Activated CD4-positive, alpha-beta T cell treated with anti-CD3 and anti-CD28 coated beads for 36 hours (primary cell): ENCODE measurements at regions of chr6 and their contacts with region 1.

Region 1: GRCh38 chr6:36885461-36886401 is at the start of gene C6orf89:
- DNase-seq: peak; percentile 99
- ATAC-seq: peak; percentile 100
- H3K4me3 Mint-ChIP-seq: peak within 1 kb of the TSS; percentile 89
- H3K27ac Mint-ChIP-seq: peak within 1 kb of the TSS; percentile 97
- H3K4me1 Mint-ChIP-seq: peaks cover 31% of the 10 kb centered on the region
- H3K27me3 Mint-ChIP-seq: no peaks in the 10 kb centered on the region
- total RNA-seq, gene C6orf89: 29.5 to 36.2 TPM

Region 2: DNA sequence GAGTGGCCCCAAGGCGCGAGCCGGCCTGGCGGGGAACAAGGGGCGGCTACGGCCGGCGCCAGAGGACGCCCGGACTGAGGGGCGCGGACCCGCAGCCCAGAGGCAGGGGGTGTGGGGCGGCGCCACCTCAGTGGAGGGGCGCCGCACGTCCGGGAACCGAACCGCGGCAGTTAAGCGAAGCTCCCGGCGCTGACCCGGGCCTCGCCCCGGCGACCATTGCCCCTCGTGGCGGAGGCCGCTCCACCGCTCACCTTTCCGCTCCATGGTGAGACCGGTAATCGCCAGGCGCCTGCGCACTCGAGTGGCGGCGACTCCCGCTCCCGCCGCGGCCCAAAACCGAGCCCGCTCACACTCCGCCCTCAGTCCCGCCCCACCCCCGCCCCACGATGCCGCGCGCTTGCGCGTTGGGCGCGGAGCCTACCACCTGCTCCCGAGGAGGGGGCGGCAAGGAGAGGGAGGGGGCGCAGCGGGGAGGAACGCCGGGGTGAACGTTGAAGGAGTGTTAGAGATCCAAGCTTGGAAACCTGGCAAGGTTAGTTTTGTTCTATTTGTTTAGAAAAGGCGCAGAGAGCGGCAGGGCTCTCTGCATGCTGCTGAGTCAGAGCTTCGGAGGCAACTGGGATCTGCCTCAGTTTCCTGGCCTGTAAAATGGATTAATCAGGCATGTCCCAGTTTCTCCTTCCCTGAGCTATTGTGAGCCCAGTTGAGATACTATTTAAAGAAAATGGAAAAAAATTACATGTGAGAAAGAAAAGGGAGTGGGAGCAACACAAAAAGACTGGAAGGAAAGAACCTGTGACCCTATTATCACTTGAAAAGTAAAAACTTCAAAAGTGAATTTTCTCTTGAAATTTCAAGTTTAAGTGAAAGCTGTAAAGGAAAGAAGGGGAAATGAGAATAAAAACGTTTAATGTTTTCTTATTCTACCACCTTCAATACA is 964.7 kb before region 1 on chr6 and contains the start of gene SRPK1:
- CTCF ChIA-PET with region 1: no interaction called
- POLR2A ChIA-PET with region 1: no interaction called
- intact Hi-C with region 1: loop called in 1 of 2 experiments (anchors 5 kb)
- DNase-seq: peak; percentile 94
- ATAC-seq: peak; percentile 80
- H3K4me3 Mint-ChIP-seq: peak within 1 kb of the TSS; percentile 95
- H3K27ac Mint-ChIP-seq: peak within 1 kb of the TSS; percentile 97
- H3K4me1 Mint-ChIP-seq: peaks cover 45% of the 10 kb centered on the region
- H3K27me3 Mint-ChIP-seq: no peaks in the 10 kb centered on the region
- total RNA-seq, gene SRPK1: 100 to 118 TPM

Region 3: DNA sequence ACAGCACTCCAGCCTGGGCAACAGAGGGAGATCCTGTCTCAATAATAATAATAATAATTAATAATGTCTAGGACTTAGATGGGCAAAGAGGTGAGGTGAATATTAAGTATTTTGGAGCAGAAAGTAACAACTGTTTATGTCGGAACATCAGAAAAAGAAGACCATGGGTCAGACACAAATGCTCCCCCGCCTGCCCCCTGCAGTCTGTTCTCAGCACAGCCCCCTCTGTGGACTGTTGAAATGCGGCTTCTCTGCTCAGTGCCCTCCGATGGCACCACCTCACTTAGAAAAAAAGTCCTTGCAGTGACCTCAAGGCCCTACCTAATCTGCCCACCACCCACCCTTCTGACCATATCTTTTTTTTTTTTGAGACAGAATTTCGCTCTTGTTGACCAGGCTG is 493.1 kb before region 1 on chr6:
- CTCF ChIA-PET with region 1: no interaction called
- POLR2A ChIA-PET with region 1: no interaction called
- intact Hi-C with region 1: no loop called
- DNase-seq: no peak
- ATAC-seq: no peak
- H3K4me3 Mint-ChIP-seq: no peak overlapping the region
- H3K27ac Mint-ChIP-seq: no peak overlapping the region
- H3K4me1 Mint-ChIP-seq: peaks cover 6% of the 10 kb centered on the region
- H3K27me3 Mint-ChIP-seq: peaks cover 16% of the 10 kb centered on the region

Region 4: GRCh38 chr6:36546920-36547645 is 338.6 kb before region 1 on chr6 and contains the start of gene STK38:
- CTCF ChIA-PET with region 1: no interaction called
- POLR2A ChIA-PET with region 1: no interaction called
- intact Hi-C with region 1: no loop called
- DNase-seq: peak; percentile 97
- ATAC-seq: peak; percentile 90
- H3K4me3 Mint-ChIP-seq: peak within 1 kb of the TSS; percentile 94
- H3K27ac Mint-ChIP-seq: peak within 1 kb of the TSS; percentile 97
- H3K4me1 Mint-ChIP-seq: peaks cover 36% of the 10 kb centered on the region
- H3K27me3 Mint-ChIP-seq: no peaks in the 10 kb centered on the region
- total RNA-seq, gene STK38: 24.0 to 27.0 TPM

Region 5: DNA sequence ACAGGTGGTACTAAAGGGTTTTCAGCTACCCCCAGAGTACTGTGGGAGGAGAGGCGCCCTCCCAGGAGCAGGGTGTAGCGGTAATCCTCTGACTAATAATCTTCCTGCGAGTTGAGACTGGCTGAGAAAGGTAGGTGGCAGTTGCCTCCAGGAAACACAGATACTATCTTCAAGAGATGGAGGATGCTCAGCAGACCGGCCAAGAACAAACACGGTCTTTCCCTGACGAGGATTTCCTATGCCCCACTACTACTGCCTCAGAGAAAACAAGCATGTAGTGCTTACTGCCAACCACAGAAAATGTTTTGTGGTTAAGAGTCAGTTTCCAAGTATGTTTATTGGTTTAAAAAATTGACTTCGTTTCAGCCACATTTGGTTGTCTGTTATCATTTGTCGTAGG is 26.9 kb after region 1 on chr6:
- CTCF ChIA-PET with region 1: interaction called, 6 read pairs
- POLR2A ChIA-PET with region 1: no interaction called
- intact Hi-C with region 1: loop called (anchors 1 kb)
- DNase-seq: peak; percentile 74
- ATAC-seq: peak; percentile 87
- H3K4me3 Mint-ChIP-seq: peak overlapping the region; percentile 37
- H3K27ac Mint-ChIP-seq: peak overlapping the region; percentile 83
- H3K4me1 Mint-ChIP-seq: peaks cover 44% of the 10 kb centered on the region
- H3K27me3 Mint-ChIP-seq: no peaks in the 10 kb centered on the region

Region 6: GRCh38 chr6:36979347-36979742 is 93.6 kb after region 1 on chr6:
- CTCF ChIA-PET with region 1: interaction called, 8 read pairs
- POLR2A ChIA-PET with region 1: no interaction called
- intact Hi-C with region 1: loop called in 1 of 2 experiments (anchors 2 kb)
- DNase-seq: peak; percentile 65
- ATAC-seq: peak; percentile 78
- H3K4me3 Mint-ChIP-seq: no peak overlapping the region
- H3K27ac Mint-ChIP-seq: peak overlapping the region; percentile 55
- H3K4me1 Mint-ChIP-seq: peaks cover 31% of the 10 kb centered on the region
- H3K27me3 Mint-ChIP-seq: no peaks in the 10 kb centered on the region

Region 7: DNA sequence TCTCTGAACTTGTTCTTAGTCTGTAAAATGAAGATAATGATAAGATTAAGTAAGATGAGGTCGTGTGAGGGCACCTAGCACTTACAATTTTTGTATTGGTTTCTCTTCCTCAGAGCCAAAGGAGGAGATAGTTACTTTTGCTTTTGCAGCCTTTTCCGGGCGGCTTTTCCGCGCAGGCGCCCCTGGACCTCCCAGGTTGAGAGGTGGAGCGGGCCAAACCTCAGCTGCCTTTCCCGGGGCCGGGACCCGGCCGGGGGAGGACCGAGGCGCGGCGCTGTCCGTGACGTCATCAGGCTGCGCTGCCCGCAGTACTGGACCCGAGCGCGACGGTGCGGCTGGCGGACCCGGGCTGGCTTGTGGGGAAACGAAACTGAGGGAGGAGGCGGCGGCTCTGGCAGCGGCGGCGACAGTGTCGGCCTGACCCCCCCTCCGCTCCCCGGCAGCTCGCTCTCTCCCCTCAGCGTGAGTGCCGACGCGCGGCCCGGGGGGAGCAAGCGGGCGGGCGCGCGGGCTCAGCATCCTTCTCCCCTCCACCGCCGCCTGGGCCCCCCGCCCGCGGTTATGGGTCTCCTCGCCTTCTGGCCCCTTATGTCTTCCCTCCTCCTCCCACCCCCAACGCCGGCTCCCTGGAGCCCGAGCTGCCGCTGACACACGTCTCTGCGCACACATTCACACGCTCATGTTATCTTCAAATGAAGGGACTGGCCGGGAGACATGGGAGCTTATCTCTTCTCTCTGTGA is 547.4 kb after region 1 on chr6 and contains the start of gene CMTR1:
- CTCF ChIA-PET with region 1: no interaction called
- POLR2A ChIA-PET with region 1: no interaction called
- intact Hi-C with region 1: loop called in 1 of 2 experiments (anchors 5 kb)
- DNase-seq: peak; percentile 98
- ATAC-seq: peak; percentile 88
- H3K4me3 Mint-ChIP-seq: peak within 1 kb of the TSS; percentile 98
- H3K27ac Mint-ChIP-seq: peak within 1 kb of the TSS; percentile 99
- H3K4me1 Mint-ChIP-seq: peaks cover 36% of the 10 kb centered on the region
- H3K27me3 Mint-ChIP-seq: peaks cover 4% of the 10 kb centered on the region
- total RNA-seq, gene CMTR1: 65.3 to 74.6 TPM